ENCODE measurements at regions of chr15 and their contacts with region 1.

Region 1: GRCh38 chr15:53197426-53197839 is 407.3 kb upstream of the ONECUT1 start:
- DNase-seq: peak; percentile 56 to 65 (median 63)
- ATAC-seq: peak; percentile 89
- H3K4me3 ChIP-seq: no peak overlapping the region
- H3K27ac ChIP-seq: no peak overlapping the region
- H3K4me1 ChIP-seq: no peaks in the 10 kb centered on the region
- H3K27me3 ChIP-seq: no peaks in the 10 kb centered on the region
- CTCF ChIP-seq: peak; percentile 68 to 87 (median 73)
- EP300 ChIP-seq: no peak
- POLR2A ChIP-seq: no peak
- RAD21 ChIP-seq: peak; percentile 34 to 67; a peak in 3 of 4 replicates

Region 2: GRCh38 chr15:52780172-52780980 is 417.1 kb before region 1 on chr15:
- CTCF ChIA-PET with region 1: interaction called, 4 read pairs
- POLR2A ChIA-PET with region 1: no interaction called
- in situ Hi-C with region 1: loop called (anchors 10 kb)
- intact Hi-C with region 1: loop called (anchors 2 kb)
- DNase-seq: peak; percentile 44 to 65 (median 48)
- ATAC-seq: peak; percentile 71
- H3K4me3 ChIP-seq: no peak overlapping the region
- H3K27ac ChIP-seq: no peak overlapping the region
- H3K4me1 ChIP-seq: peaks cover 0 to 5% of the 10 kb centered on the region in 2 experiments; a peak in 1 of 5 replicates
- H3K27me3 ChIP-seq: peaks cover 3 to 15% of the 10 kb centered on the region in 2 experiments; a peak in 3 of 5 replicates
- CTCF ChIP-seq: peak; percentile 63 to 91 (median 83)
- EP300 ChIP-seq: no peak
- POLR2A ChIP-seq: no peak
- RAD21 ChIP-seq: peak; percentile 69 to 80